Calu3 (cell line): ENCODE measurements at regions of chr3 and their contacts with region 1.

Region 1: DNA sequence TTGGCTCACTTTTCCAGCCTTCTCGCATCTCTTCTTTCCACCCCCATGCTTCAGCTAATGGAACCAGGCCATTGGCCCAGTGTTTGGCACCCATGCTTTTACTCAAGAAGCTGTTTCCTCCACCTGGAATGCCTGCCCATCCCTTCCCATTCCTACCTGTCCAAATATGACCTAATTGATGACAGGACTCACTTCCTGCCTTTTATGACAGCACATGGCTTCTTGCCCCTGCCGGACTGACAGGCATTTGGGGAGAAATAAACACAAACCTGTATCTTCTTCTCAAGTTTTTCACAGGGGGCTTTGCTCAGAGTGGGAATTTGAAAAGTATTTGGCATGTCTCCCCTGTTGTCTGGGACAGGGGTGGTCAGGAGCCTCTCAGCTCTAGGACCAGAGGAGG is 120.1 kb downstream of the ABHD5 start:
- DNase-seq: no peak
- H3K4me3 Mint-ChIP-seq: no peak overlapping the region
- H3K27ac Mint-ChIP-seq: no peak overlapping the region
- H3K4me1 Mint-ChIP-seq: peaks cover 8% of the 10 kb centered on the region
- H3K27me3 Mint-ChIP-seq: peaks cover 54% of the 10 kb centered on the region
- CTCF ChIP-seq: no peak

Region 2: DNA sequence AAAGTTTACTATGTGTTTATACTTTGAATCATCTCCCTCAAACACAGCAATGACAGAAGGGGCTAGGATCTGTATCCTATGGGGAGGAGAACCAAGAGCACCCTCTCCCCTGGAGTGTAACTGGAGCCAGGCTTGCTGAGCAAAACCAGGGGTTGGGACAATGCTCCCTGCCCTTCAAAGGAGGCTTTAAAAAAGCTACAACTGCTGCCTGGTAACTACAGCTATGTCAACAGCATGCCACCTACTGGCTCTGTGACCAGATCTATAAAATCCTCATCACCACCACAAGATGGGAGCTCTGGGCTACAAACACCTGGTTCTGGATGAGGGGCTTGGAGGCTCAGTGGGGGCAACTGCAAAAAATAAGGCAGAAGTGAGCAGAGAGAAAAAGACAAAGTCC is 250.8 kb before region 1 on chr3:
- CTCF ChIA-PET with region 1: no interaction called
- intact Hi-C with region 1: no loop called
- DNase-seq: no peak
- H3K4me3 Mint-ChIP-seq: no peak overlapping the region
- H3K27ac Mint-ChIP-seq: no peak overlapping the region
- H3K4me1 Mint-ChIP-seq: no peaks in the 10 kb centered on the region
- H3K27me3 Mint-ChIP-seq: no peaks in the 10 kb centered on the region
- CTCF ChIP-seq: no peak

Region 3: GRCh38 chr3:43687499-43687811 is 123.3 kb before region 1 on chr3:
- CTCF ChIA-PET with region 1: interaction called, 11 read pairs
- intact Hi-C with region 1: no loop called
- DNase-seq: no peak
- H3K4me3 Mint-ChIP-seq: no peak overlapping the region
- H3K27ac Mint-ChIP-seq: no peak overlapping the region
- H3K4me1 Mint-ChIP-seq: peaks cover 21% of the 10 kb centered on the region
- H3K27me3 Mint-ChIP-seq: no peaks in the 10 kb centered on the region
- CTCF ChIP-seq: no peak